ENCODE measurements at regions of chr11 and their contacts with region 1.

Region 1: DNA sequence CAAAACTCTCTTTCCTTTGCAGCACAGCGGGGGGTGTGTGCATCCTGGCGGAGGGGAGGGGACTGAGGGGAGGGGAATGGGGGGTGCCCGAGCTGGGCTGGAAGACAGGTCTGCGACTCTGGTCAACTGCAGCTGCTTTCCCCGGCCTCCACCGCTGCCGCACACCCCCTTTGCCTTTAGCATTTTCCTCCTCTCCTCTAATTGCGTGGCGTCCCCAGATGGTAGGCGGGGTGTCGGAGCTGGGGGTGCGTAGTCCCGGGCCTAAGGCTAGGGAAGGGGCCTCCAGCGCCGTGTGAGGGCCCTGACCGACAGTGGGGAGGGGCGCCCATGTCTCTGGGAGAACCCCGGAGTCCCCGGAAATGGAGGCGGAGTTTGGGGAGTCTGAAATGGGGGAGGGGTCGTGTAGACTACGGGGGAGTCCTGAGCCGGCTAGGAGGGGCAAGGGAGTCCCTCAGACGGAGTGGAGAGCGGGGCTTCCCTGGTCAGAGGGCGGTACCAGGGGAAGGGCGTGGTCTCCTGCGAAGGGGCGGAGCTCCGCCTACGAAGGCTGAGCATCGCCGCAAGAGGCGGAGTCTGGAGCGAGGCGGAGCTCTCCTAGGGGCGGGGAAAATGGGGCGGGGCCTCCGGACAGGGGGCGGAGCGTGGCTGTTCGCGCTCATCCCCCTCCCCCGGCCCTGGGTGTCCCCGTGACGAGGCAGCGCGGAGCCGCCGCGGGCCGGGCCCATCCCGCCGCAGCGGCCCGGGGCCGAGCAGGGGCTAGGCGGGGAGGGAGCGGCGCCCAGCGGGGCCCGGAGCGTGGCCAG is at the start of gene PELI3:
- DNase-seq: peak; percentile 90 to 96
- H3K4me3 ChIP-seq: peak within 1 kb of the TSS; percentile 67
- H3K27ac ChIP-seq: peak within 1 kb of the TSS; percentile 67 to 85
- H3K4me1 ChIP-seq: peaks cover 0 to 22% (median 16%) of the 10 kb centered on the region in 4 donors
- H3K27me3 ChIP-seq: no peaks in the 10 kb centered on the region
- CTCF ChIP-seq: no peak

Region 2: GRCh38 chr11:66479394-66480116 is 13.1 kb after region 1 on chr11:
- intact Hi-C with region 1: loop called (anchors 2 kb)
- DNase-seq: peak; percentile 58 to 79
- H3K4me3 ChIP-seq: peak overlapping the region; percentile 67 to 77
- H3K27ac ChIP-seq: peak overlapping the region; percentile 84 to 97
- H3K4me1 ChIP-seq: peaks cover 0 to 22% (median 15%) of the 10 kb centered on the region in 4 donors
- H3K27me3 ChIP-seq: no peaks in the 10 kb centered on the region
- CTCF ChIP-seq: no peak

Measured in tibial artery (tissue), 4 donors.